Activated B cell treated with CpG ODN at 0.5 μM for 24 hours (primary cell): ENCODE measurements at regions of chr1 and their contacts with region 1.

Region 1: GRCh38 chr1:15526490-15527339 is at the start of gene DNAJC16:
- DNase-seq: peak; percentile 90
- ATAC-seq: peak; percentile 33
- H3K4me3 Mint-ChIP-seq: peak within 1 kb of the TSS; percentile 87
- H3K27ac Mint-ChIP-seq: peak within 1 kb of the TSS; percentile 99
- H3K4me1 Mint-ChIP-seq: peaks cover 49% of the 10 kb centered on the region
- H3K27me3 Mint-ChIP-seq: no peaks in the 10 kb centered on the region
- CTCF ChIP-seq: no peak
- total RNA-seq, gene DNAJC16: 35.5 and 35.9 TPM in 2 replicates

Region 2: GRCh38 chr1:13699936-13700520 is 1826.7 kb before region 1 on chr1 and contains the start of gene PRDM2:
- CTCF ChIA-PET with region 1: no interaction called
- POLR2A ChIA-PET with region 1: no interaction called
- intact Hi-C with region 1: loop called (anchors 10 kb)
- DNase-seq: peak; percentile 77
- ATAC-seq: peak; percentile 30
- H3K4me3 Mint-ChIP-seq: peak within 1 kb of the TSS; percentile 91
- H3K27ac Mint-ChIP-seq: peak within 1 kb of the TSS; percentile 98
- H3K4me1 Mint-ChIP-seq: peaks cover 60% of the 10 kb centered on the region
- H3K27me3 Mint-ChIP-seq: no peaks in the 10 kb centered on the region
- CTCF ChIP-seq: no peak
- total RNA-seq, gene PRDM2: 183 and 194 TPM in 2 replicates

Region 3: DNA sequence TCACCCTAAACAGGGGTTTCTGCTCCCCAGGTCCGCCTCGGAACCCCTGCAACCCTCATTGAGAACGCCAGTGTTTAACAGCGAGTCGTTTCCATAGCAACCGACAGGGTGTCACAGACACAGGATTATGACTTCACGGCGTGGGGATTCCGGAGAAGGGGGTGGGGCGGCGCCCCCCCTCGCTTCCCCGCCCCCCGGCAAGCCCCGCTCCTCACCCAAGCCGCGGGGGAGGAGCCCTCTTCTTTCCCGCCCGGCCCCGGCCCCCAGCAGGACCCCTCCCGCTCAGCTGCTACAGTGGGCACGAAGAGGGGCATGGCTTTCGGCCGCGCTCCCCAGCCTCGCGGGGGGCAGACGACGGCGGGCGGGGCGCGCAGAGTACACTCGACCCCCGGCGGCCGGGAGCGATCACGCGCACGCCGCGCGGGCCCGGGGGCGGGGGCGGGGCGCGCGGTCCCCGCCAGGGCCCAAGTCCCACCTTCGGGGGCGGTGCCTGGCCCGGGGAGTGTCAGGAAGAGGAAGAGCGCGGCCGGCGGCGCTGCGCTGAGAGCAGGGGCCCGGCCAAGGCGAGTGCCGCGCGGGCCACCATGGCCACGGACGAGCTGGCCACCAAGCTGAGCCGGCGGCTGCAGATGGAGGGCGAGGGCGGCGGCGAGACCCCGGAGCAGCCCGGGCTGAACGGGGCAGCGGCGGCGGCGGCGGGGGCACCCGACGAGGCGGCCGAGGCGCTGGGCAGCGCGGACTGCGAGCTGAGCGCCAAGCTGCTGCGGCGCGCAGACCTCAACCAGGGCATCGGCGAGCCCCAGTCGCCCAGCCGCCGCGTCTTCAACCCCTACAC is 117.1 kb before region 1 on chr1 and contains the start of gene EFHD2:
- CTCF ChIA-PET with region 1: no interaction called
- POLR2A ChIA-PET with region 1: no interaction called
- intact Hi-C with region 1: loop called (anchors 2 kb)
- DNase-seq: peak; percentile 84
- ATAC-seq: peak; percentile 86
- H3K4me3 Mint-ChIP-seq: peak within 1 kb of the TSS; percentile 91
- H3K27ac Mint-ChIP-seq: peak within 1 kb of the TSS; percentile 91
- H3K4me1 Mint-ChIP-seq: peaks cover 41% of the 10 kb centered on the region
- H3K27me3 Mint-ChIP-seq: peaks cover 4% of the 10 kb centered on the region
- CTCF ChIP-seq: no peak
- total RNA-seq, gene EFHD2: 55.3 and 56.5 TPM in 2 replicates

Region 4: DNA sequence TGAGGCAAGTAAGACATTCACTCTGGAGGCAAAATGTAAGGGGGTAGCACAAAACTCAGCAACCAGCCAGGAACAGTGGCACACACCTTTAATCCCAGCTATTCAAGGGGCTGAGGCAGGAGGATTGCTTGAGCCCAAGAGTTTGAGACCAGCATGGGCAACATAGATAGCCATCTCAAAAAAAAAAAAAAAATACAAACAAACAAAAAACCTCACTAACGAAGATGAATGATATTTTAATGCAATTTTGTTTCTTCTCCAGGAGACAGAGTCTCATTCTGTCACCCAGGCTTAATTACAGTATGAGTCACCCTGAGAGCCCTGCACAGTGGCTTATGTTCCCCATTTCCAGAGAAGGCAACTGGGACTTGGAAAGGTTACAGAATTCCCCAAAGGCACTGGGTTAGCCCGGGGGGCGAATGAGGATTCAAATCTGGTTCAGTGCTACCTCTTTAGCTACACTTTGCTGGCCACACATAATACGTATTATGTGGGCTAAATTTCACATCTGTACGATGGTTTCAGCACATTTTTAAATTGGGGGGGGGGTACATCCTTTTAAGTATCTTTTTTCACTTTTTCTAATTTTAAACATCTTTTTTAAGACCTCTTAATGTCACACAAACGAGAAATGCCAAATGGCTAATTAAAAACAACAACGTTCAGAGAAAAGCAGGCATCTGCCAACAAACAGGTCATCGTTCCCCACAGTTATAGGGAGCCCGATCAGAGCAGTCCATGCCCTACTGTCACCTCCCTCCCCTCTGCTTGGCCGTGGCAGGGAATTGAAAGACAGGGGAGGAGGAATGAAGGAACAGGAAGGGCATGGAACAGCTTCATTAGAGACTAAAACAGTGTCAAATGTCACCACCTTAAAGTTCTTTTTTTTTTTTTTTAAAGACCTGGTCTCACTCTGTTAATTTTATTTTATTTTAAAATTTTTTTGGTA is 66.7 kb before region 1 on chr1:
- CTCF ChIA-PET with region 1: no interaction called
- POLR2A ChIA-PET with region 1: no interaction called
- intact Hi-C with region 1: no loop called
- DNase-seq: no peak
- ATAC-seq: no peak
- H3K4me3 Mint-ChIP-seq: no peak overlapping the region
- H3K27ac Mint-ChIP-seq: no peak overlapping the region
- H3K4me1 Mint-ChIP-seq: no peaks in the 10 kb centered on the region
- H3K27me3 Mint-ChIP-seq: peaks cover 13% of the 10 kb centered on the region
- CTCF ChIP-seq: no peak

Region 5: DNA sequence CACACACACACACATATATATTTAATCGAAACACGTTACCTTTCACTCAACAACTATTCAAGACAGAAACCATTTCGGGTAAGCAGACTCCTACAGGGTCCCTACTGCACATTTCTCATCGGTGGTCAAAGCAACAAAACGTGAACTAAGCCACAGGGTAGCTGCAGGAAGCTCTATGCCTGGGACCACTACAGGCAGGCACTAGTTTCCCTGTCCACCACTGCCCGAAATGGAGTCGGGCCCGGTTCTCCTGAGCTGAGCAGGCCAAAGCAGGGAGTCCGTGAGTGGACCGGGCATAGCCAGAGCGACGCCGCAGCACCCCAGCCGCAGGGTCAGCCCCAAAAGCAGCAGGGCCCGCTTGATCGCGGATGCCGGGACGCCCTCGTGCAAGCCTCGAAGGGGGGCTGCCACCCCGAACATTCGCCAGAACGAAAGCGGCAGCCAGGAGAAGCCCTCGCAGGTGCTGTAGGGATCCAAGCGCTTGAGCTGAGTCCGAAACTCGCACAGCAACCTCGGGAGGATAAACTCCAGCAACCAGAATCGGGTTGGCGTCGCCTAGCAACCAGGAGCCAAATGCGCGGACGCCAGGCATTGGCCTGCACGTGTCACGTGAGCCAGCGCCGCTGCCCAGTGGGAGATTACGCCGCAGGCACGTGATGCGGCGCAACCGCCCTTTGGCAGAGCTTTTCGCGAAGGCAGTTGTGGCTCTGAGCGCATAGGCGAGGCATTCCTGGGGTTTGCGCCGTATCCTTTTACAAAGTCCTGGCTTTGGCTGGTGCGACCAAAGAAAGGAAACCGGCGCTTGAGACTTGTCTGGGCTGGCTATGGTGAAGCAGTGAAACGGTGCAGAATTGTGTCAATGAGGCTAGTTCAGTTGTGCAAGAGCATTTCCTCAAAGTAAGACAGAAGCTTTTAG is 76.6 kb after region 1 on chr1:
- CTCF ChIA-PET with region 1: no interaction called
- POLR2A ChIA-PET with region 1: interaction called, 12 read pairs
- intact Hi-C with region 1: loop called (anchors 1 kb)
- DNase-seq: peak; percentile 87
- ATAC-seq: peak; percentile 94
- H3K4me3 Mint-ChIP-seq: peak overlapping the region; percentile 85
- H3K27ac Mint-ChIP-seq: peak overlapping the region; percentile 81
- H3K4me1 Mint-ChIP-seq: peaks cover 14% of the 10 kb centered on the region
- H3K27me3 Mint-ChIP-seq: no peaks in the 10 kb centered on the region
- CTCF ChIP-seq: no peak

Region 6: DNA sequence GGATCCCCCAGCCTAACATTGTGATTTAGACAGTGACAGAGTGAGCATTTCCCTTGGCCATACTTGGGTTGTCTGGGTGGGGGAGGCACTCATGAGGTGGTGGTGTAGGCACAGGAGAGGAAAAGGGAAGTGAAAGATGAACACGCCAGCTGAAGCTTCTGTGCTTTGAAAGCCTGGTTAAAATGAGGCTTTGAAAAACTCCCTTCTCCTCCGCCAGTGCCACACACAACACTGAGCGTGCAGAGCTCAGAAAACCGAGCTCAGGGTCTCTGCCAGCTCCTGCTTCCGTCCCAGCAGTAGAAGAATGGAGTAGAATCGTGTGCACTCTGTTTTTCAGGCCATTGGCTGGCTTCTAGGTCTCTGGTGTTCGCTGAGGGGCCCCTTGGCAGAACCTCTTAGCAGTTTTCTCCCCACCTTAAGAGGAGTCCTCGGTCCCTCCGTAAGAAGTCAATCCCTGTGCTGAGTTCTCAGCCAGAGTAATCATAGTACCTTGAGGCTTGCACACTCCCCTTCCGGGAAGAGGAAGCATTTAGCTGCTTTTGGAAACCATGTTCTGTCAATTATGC is 170.3 kb after region 1 on chr1:
- CTCF ChIA-PET with region 1: no interaction called
- POLR2A ChIA-PET with region 1: interaction called, 5 read pairs
- intact Hi-C with region 1: loop called (anchors 2 kb)
- DNase-seq: peak; percentile 60
- ATAC-seq: peak; percentile 92
- H3K4me3 Mint-ChIP-seq: peak overlapping the region; percentile 81
- H3K27ac Mint-ChIP-seq: peak overlapping the region; percentile 97
- H3K4me1 Mint-ChIP-seq: peaks cover 75% of the 10 kb centered on the region
- H3K27me3 Mint-ChIP-seq: no peaks in the 10 kb centered on the region
- CTCF ChIP-seq: no peak

Region 7: GRCh38 chr1:15966081-15966955 is 439.6 kb after region 1 on chr1:
- CTCF ChIA-PET with region 1: no interaction called
- POLR2A ChIA-PET with region 1: no interaction called
- intact Hi-C with region 1: loop called (anchors 10 kb)
- DNase-seq: peak; percentile 75
- ATAC-seq: peak; percentile 79
- H3K4me3 Mint-ChIP-seq: peak overlapping the region; percentile 80
- H3K27ac Mint-ChIP-seq: peak overlapping the region; percentile 88
- H3K4me1 Mint-ChIP-seq: peaks cover 79% of the 10 kb centered on the region
- H3K27me3 Mint-ChIP-seq: no peaks in the 10 kb centered on the region
- CTCF ChIP-seq: no peak

Region 8: DNA sequence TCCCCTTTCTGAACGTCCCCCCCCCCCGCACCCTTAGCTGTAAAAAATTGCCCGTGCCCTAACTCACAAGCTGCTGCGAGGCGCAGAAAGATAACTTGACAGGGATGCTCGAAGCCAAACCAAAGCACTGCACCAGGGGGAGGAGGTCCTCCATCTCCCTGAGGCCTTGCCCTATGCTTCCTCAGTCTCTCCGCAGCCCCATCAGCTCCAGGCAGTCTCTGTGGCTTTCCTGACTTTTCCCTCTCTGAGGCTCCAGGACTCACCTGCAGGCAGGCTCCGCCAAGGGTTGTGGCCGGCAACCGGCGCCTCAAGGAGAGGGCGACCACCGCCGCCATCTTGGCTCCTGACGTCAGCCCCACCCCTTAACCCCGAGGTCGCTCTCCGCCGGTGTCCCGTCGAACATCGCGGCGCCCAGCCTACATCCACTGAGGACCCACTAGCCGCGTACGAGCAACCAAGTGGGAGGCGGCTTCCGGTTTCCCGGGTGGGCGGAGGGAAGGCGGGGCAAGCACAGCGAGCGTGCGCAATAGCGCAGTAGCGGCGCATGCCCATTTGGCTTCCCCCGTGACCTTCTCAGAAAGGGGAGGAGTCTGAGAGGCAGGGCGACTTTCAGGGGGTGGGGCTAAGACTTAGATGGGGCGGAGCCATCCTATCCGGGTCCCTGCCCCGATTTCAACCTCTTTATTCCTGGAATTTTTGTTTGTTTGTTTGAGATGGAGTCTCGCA is 1527.1 kb after region 1 on chr1 and contains the start of gene SDHB:
- CTCF ChIA-PET with region 1: no interaction called
- POLR2A ChIA-PET with region 1: no interaction called
- intact Hi-C with region 1: loop called (anchors 10 kb)
- DNase-seq: peak; percentile 100
- ATAC-seq: peak; percentile 98
- H3K4me3 Mint-ChIP-seq: peak within 1 kb of the TSS; percentile 99
- H3K27ac Mint-ChIP-seq: peak within 1 kb of the TSS; percentile 94
- H3K4me1 Mint-ChIP-seq: peaks cover 25% of the 10 kb centered on the region
- H3K27me3 Mint-ChIP-seq: peaks cover 6% of the 10 kb centered on the region
- CTCF ChIP-seq: no peak
- total RNA-seq, gene SDHB: 70.7 and 78.3 TPM in 2 replicates